ENCODE measurements at regions of chr11 and their contacts with region 1.

Region 1: GRCh38 chr11:67317205-67317887 is 14.0 kb downstream of the SSH3 start:
- DNase-seq: peak; percentile 99
- H3K4me3 ChIP-seq: peak overlapping the region; percentile 72
- H3K27ac ChIP-seq: peak overlapping the region; percentile 76
- H3K4me1 ChIP-seq: no peaks in the 10 kb centered on the region
- H3K27me3 ChIP-seq: no peaks in the 10 kb centered on the region
- CTCF ChIP-seq: peak; percentile 99

Region 2: GRCh38 chr11:66568124-66568916 is 749.0 kb before region 1 on chr11 and contains the start of gene CTSF:
- CTCF ChIA-PET with region 1: no interaction called
- POLR2A ChIA-PET with region 1: no interaction called
- intact Hi-C with region 1: no loop called
- DNase-seq: peak; percentile 81
- H3K4me3 ChIP-seq: peak within 1 kb of the TSS; percentile 54
- H3K27ac ChIP-seq: no peak within 1 kb of the TSS
- H3K4me1 ChIP-seq: peaks cover 5% of the 10 kb centered on the region
- H3K27me3 ChIP-seq: no peaks in the 10 kb centered on the region
- CTCF ChIP-seq: no peak
- total RNA-seq, gene CTSF: 3.7 and 6.9 TPM in 2 replicates

Region 3: GRCh38 chr11:67053896-67054842 is 263.2 kb before region 1 on chr11:
- CTCF ChIA-PET with region 1: interaction called, 21 read pairs
- POLR2A ChIA-PET with region 1: no interaction called
- intact Hi-C with region 1: loop called (anchors 10 kb)
- DNase-seq: peak; percentile 71
- H3K4me3 ChIP-seq: no peak overlapping the region
- H3K27ac ChIP-seq: no peak overlapping the region
- H3K4me1 ChIP-seq: peaks cover 12% of the 10 kb centered on the region
- H3K27me3 ChIP-seq: no peaks in the 10 kb centered on the region
- CTCF ChIP-seq: peak; percentile 93

Region 4: DNA sequence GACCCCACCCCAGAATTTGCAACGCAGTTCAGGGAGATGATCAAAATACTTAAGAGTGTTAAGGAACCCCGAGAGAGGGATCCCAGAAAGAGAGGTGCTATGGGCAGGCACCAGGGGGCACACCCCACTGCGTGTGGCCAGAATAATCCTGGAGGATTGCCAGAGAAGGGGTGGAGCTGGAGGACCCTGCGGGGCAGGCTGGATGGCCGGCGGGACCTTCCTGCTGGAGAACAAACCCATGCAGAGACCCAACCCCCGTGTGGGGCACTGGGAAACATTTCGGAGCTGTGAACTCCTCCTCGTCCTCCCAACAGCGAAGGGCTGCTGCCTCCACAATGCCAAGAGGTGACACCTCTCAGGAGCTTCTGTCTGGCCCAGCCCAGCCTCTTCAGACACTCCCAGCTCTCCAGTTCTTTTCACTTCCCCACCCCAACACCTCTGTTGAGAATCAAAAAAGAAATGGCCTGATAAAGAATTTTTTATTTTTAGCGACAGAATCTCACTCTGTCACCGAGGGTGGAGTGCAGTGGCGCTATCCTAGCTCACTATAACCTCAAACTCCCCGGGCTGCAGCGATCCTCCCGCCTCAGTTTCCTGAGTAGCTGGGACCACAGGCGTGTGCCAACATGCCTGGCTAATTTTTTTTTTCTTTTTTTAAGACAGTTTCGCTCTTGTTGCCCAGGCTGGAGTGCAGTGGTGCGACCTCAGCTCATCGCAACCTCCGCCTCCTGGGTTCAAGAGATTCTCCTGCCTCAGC is 235.1 kb before region 1 on chr11:
- CTCF ChIA-PET with region 1: interaction called, 4 read pairs
- POLR2A ChIA-PET with region 1: no interaction called
- intact Hi-C with region 1: loop called (anchors 5 kb)
- DNase-seq: no peak
- H3K4me3 ChIP-seq: no peak overlapping the region
- H3K27ac ChIP-seq: no peak overlapping the region
- H3K4me1 ChIP-seq: peaks cover 19% of the 10 kb centered on the region
- H3K27me3 ChIP-seq: no peaks in the 10 kb centered on the region
- CTCF ChIP-seq: no peak

Region 5: GRCh38 chr11:67262731-67263675 is 54.3 kb before region 1 on chr11:
- CTCF ChIA-PET with region 1: interaction called, 76 read pairs
- POLR2A ChIA-PET with region 1: no interaction called
- intact Hi-C with region 1: loop called (anchors 1 kb)
- DNase-seq: peak; percentile 90
- H3K4me3 ChIP-seq: no peak overlapping the region
- H3K27ac ChIP-seq: no peak overlapping the region
- H3K4me1 ChIP-seq: peaks cover 30% of the 10 kb centered on the region
- H3K27me3 ChIP-seq: no peaks in the 10 kb centered on the region
- CTCF ChIP-seq: peak; percentile 99

Region 6: GRCh38 chr11:67270256-67271056 is 46.9 kb before region 1 on chr11:
- CTCF ChIA-PET with region 1: interaction called, 10 read pairs
- POLR2A ChIA-PET with region 1: no interaction called
- intact Hi-C with region 1: loop called (anchors 1 kb)
- DNase-seq: peak; percentile 93
- H3K4me3 ChIP-seq: peak overlapping the region; percentile 32
- H3K27ac ChIP-seq: peak overlapping the region; percentile 83
- H3K4me1 ChIP-seq: peaks cover 85% of the 10 kb centered on the region
- H3K27me3 ChIP-seq: no peaks in the 10 kb centered on the region
- CTCF ChIP-seq: no peak